Transverse colon (tissue), 4 donors: ENCODE measurements at regions of chr9 and their contacts with region 1.

Region 1: DNA sequence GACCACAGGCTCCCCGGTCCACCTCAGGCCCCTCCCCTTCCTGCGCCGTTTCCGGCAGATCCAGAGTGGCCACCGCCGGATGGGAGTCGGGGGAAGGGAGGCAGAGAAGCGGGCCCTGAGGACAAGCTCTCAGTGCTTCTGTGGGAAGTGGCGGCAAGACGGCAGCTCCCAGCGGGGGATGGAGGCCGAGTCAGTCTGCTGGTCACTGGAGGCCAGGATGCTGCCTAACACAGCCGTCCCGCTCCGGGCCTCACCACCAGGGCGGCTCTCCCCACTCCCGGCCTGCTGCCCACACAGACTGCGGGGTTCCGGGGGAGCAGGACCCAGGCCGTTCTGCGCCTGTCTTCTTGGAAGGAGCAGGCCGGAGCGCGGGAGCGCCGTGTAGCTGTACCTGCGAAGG is 31.4 kb downstream of the FXN start:
- DNase-seq: no peak
- H3K4me3 ChIP-seq: no peak overlapping the region
- H3K27ac ChIP-seq: no peak overlapping the region
- H3K4me1 ChIP-seq: no peaks in the 10 kb centered on the region
- H3K27me3 ChIP-seq: no peaks in the 10 kb centered on the region
- CTCF ChIP-seq: no peak
- EP300 ChIP-seq: no peak
- POLR2A ChIP-seq: no peak

Region 2: GRCh38 chr9:69174616-69175463 is 107.9 kb after region 1 on chr9:
- in situ Hi-C with region 1: loop called in 1 of 4 experiments (anchors 25 kb)
- intact Hi-C with region 1: no loop called
- DNase-seq: peak; percentile 21
- H3K4me3 ChIP-seq: peak overlapping the region; percentile 38 to 57 (median 44)
- H3K27ac ChIP-seq: peak overlapping the region; percentile 44 to 79 (median 66)
- H3K4me1 ChIP-seq: peaks cover 0 to 40% (median 20%) of the 10 kb centered on the region in 4 donors
- H3K27me3 ChIP-seq: no peaks in the 10 kb centered on the region
- CTCF ChIP-seq: no peak
- EP300 ChIP-seq: no peak
- POLR2A ChIP-seq: no peak

Region 3: GRCh38 chr9:69444021-69444420 is 377.1 kb after region 1 on chr9:
- in situ Hi-C with region 1: no loop called
- intact Hi-C with region 1: no loop called
- DNase-seq: no peak
- H3K4me3 ChIP-seq: no peak overlapping the region
- H3K27ac ChIP-seq: no peak overlapping the region
- H3K4me1 ChIP-seq: no peaks in the 10 kb centered on the region
- H3K27me3 ChIP-seq: no peaks in the 10 kb centered on the region
- CTCF ChIP-seq: no peak
- EP300 ChIP-seq: no peak
- POLR2A ChIP-seq: no peak